Gastrocnemius medialis (tissue), 4 donors: ENCODE measurements at regions of chr2 and their contacts with region 1.

Region 1: GRCh38 chr2:41194230-41194629 is 742.3 kb upstream of the SLC8A1 start:
- DNase-seq: no peak
- ATAC-seq: no peak
- H3K4me3 ChIP-seq: no peak overlapping the region
- H3K27ac ChIP-seq: no peak overlapping the region
- H3K4me1 ChIP-seq: no peaks in the 10 kb centered on the region
- H3K27me3 ChIP-seq: no peaks in the 10 kb centered on the region
- CTCF ChIP-seq: no peak
- POLR2A ChIP-seq: no peak

Region 2: DNA sequence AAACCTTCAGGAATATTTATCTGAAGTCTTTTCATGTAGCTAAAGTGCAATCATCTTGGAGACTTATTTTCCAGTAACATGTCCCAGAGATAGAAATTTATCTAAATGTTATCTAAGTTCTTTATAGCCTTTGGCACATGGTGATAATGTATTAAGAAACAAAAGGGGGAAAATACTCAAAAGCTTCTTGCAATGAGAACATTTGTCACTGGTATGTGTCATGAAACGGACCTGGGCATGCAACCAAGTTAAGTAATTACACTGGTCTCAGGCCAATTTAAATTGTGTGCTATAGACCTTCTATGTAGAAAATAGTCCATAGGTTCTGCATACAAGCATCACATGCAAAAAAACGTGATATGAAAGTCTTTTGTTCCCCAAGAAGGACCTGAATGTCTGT is 878.5 kb before region 1 on chr2:
- in situ Hi-C with region 1: loop called in 1 of 4 experiments (anchors 25 kb)
- intact Hi-C with region 1: no loop called
- DNase-seq: no peak
- ATAC-seq: no peak
- H3K4me3 ChIP-seq: no peak overlapping the region
- H3K27ac ChIP-seq: no peak overlapping the region
- H3K4me1 ChIP-seq: no peaks in the 10 kb centered on the region
- H3K27me3 ChIP-seq: no peaks in the 10 kb centered on the region
- CTCF ChIP-seq: no peak
- POLR2A ChIP-seq: no peak

Region 3: GRCh38 chr2:41026613-41027012 is 167.6 kb before region 1 on chr2:
- in situ Hi-C with region 1: no loop called
- intact Hi-C with region 1: no loop called
- DNase-seq: no peak
- ATAC-seq: no peak
- H3K4me3 ChIP-seq: no peak overlapping the region
- H3K27ac ChIP-seq: no peak overlapping the region
- H3K4me1 ChIP-seq: no peaks in the 10 kb centered on the region
- H3K27me3 ChIP-seq: no peaks in the 10 kb centered on the region
- CTCF ChIP-seq: no peak
- POLR2A ChIP-seq: no peak

Region 4: GRCh38 chr2:41314511-41315070 is 120.4 kb after region 1 on chr2:
- in situ Hi-C with region 1: no loop called
- intact Hi-C with region 1: no loop called
- DNase-seq: no peak
- ATAC-seq: no peak
- H3K4me3 ChIP-seq: no peak overlapping the region
- H3K27ac ChIP-seq: no peak overlapping the region
- H3K4me1 ChIP-seq: no peaks in the 10 kb centered on the region
- H3K27me3 ChIP-seq: no peaks in the 10 kb centered on the region
- CTCF ChIP-seq: no peak
- POLR2A ChIP-seq: no peak